ENCODE measurements at regions of chr5 and their contacts with region 1.

Region 1: DNA sequence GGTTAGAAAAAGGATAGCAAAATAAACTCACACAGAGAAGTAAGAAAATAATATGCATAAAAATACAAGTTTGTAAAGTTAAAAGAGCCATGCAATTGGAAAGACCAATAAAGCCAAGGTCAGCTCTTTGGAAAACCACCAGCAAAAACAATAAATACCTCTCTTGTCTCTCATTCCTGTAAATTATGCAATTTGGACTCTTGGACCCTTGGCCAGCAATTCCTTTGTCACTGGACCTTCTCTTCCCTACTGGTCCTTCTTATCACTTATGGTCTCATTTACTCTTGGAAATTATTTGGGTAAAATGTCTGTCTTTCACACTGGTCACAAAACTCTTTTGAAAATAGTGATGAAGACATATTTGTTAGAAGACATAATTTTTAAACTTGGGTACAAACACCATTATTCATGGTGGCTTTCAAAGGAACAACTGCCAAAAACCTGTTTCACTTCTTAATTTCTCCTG is 379.5 kb downstream of the TMEM232 start:
- DNase-seq: peak; percentile 97
- ATAC-seq: peak; percentile 91
- H3K4me3 ChIP-seq: no peak overlapping the region
- H3K27ac ChIP-seq: peak overlapping the region; percentile 84
- H3K4me1 ChIP-seq: peaks cover 55% of the 10 kb centered on the region
- H3K27me3 ChIP-seq: no peaks in the 10 kb centered on the region
- CTCF ChIP-seq: no peak
- EP300 ChIP-seq: peak; percentile 94 to 97
- POLR2A ChIP-seq: no peak
- RAD21 ChIP-seq: no peak

Region 2: DNA sequence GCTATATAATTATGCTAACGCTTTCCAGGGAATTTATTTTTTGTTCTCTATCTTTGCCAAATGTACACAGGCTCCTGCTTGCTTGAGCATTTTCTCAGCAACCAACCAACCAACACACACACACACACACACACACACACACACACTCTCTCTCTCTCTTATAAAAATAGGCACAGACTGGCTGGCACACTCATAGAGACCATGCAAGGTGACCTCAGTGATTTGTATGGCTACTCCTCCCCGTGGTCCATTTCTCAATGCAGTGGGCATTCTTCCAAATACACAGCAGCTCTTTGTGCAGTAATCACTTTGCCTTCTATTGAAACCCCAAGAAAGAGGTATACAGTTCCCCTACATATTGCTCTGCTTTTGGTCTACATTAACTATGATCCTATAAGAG is 241.2 kb before region 1 on chr5:
- CTCF ChIA-PET with region 1: no interaction called
- POLR2A ChIA-PET with region 1: interaction called, 3 read pairs
- in situ Hi-C with region 1: no loop called
- intact Hi-C with region 1: loop called (anchors 5 kb)
- DNase-seq: peak; percentile 79
- ATAC-seq: peak; percentile 63
- H3K4me3 ChIP-seq: no peak overlapping the region; a peak in 1 of 6 replicates
- H3K27ac ChIP-seq: no peak overlapping the region
- H3K4me1 ChIP-seq: peaks cover 65% of the 10 kb centered on the region
- H3K27me3 ChIP-seq: no peaks in the 10 kb centered on the region
- CTCF ChIP-seq: no peak
- EP300 ChIP-seq: no peak; a peak in 1 of 4 replicates
- POLR2A ChIP-seq: no peak
- RAD21 ChIP-seq: no peak

Region 3: DNA sequence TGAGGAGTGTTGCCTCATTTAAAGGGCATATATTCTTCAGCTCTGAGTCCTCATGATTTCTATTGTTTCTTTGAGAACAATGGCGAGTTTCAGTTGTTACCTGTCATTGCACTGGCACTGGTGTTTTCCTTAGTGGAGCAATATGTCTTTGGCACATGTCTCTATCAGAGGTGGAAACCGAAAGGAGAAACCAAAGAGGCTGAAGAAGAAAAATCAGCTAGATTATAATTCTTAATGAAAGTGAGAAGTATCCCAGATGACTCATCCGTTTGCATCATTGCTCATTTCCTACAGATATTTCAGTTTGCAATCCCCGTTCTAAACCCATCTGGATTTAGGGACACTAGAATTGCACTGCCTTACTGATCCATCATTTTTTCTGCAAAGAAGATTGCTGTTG is 55.0 kb after region 1 on chr5:
- CTCF ChIA-PET with region 1: no interaction called
- POLR2A ChIA-PET with region 1: no interaction called
- in situ Hi-C with region 1: no loop called
- intact Hi-C with region 1: loop called (anchors 5 kb)
- DNase-seq: no peak
- ATAC-seq: no peak
- H3K4me3 ChIP-seq: no peak overlapping the region
- H3K27ac ChIP-seq: no peak overlapping the region
- H3K4me1 ChIP-seq: peaks cover 16% of the 10 kb centered on the region
- H3K27me3 ChIP-seq: no peaks in the 10 kb centered on the region
- CTCF ChIP-seq: no peak
- EP300 ChIP-seq: no peak
- POLR2A ChIP-seq: no peak
- RAD21 ChIP-seq: no peak

Region 4: DNA sequence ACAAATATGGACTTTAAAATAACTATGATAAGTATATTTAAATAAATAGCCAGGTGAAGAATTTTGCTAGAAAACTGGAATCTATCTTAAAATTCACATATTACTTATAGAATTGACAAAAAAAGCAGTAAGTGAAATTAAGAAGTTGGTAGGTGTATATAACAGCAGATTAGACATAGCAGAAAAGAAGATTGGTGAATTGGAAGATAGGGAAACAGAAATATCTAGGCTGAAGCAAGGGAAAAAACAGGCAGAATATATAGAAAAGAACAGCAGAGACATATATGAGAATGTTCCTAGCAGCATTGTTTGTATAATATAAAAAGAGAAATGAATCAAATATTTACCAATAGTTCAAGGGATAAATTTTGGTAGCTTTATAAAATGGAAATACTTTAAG is 84.7 kb after region 1 on chr5:
- CTCF ChIA-PET with region 1: no interaction called
- POLR2A ChIA-PET with region 1: no interaction called
- in situ Hi-C with region 1: no loop called
- intact Hi-C with region 1: no loop called
- DNase-seq: no peak
- ATAC-seq: no peak
- H3K4me3 ChIP-seq: no peak overlapping the region
- H3K27ac ChIP-seq: no peak overlapping the region
- H3K4me1 ChIP-seq: no peaks in the 10 kb centered on the region
- H3K27me3 ChIP-seq: no peaks in the 10 kb centered on the region
- CTCF ChIP-seq: no peak
- EP300 ChIP-seq: no peak
- POLR2A ChIP-seq: no peak
- RAD21 ChIP-seq: no peak

Measured in HepG2 (cell line).